B cell (primary cell): ENCODE measurements at regions of chr14 and their contacts with region 1.

Region 1: DNA sequence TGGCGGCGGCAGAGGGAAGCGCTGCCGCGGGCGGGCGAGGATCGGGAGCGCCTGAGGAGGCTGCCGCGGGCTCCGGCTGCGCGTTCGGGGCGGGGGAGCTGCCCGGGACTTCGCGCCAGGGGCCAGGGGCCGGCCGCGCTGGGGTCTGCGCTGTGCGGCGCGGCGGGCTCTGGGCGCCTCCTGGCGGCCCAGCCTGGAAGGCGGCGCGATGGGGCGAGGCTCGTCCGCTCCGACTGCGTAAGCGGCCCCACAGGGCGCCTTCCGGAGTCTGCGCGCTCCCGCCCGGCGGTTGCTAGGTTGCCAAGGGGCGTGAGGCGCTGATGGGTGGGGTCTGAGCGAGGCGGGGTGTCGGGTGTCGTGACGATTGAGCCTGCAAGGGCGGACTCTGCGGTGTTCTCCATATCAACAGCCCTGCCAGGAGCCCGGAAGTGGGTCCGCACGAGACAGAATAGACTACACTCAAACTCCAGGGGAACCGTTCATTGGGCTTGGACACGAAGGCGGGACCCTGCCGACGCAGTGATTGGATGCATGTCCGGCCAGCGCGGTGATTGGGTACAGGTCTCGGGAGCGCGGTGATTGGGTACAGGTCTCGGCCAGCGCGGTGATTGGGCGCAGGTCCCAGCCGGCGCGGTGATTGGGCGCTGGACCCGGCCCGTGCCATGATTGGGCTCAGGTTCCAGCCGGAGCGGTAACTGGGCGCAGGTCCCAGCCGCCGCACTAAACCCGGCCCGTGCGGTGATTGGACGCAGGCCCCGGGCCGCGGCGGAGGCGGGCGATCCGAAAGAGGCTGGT is at the start of gene TEDC1:
- DNase-seq: peak; percentile 100
- ATAC-seq: peak; percentile 69
- H3K4me3 ChIP-seq: peak within 1 kb of the TSS in 4 of 5 experiments; percentile 65 to 89 (median 79)
- H3K4me3 Mint-ChIP-seq: peak within 1 kb of the TSS; percentile 90
- H3K27ac ChIP-seq: peak within 1 kb of the TSS; percentile 95 to 96
- H3K27ac Mint-ChIP-seq: peak within 1 kb of the TSS; percentile 97
- H3K4me1 ChIP-seq: peaks cover 33 to 49% of the 10 kb centered on the region in 2 donors
- H3K4me1 Mint-ChIP-seq: peaks cover 35% of the 10 kb centered on the region
- H3K27me3 ChIP-seq: no peaks in the 10 kb centered on the region
- H3K27me3 Mint-ChIP-seq: no peaks in the 10 kb centered on the region
- CTCF ChIP-seq: peak; percentile 82
- total RNA-seq, gene TEDC1: 22.2 and 25.9 TPM in 2 replicates

Region 2: GRCh38 chr14:105203057-105203531 is 287.7 kb before region 1 on chr14:
- CTCF ChIA-PET with region 1: no interaction called
- POLR2A ChIA-PET with region 1: interaction called, 3 read pairs
- intact Hi-C with region 1: loop called (anchors 5 kb)
- DNase-seq: peak; percentile 77
- ATAC-seq: peak; percentile 45
- H3K4me3 ChIP-seq: no peak overlapping the region
- H3K4me3 Mint-ChIP-seq: no peak overlapping the region
- H3K27ac ChIP-seq: no peak overlapping the region
- H3K27ac Mint-ChIP-seq: no peak overlapping the region
- H3K4me1 ChIP-seq: peaks cover 18 to 29% of the 10 kb centered on the region in 2 donors
- H3K4me1 Mint-ChIP-seq: peaks cover 17% of the 10 kb centered on the region
- H3K27me3 ChIP-seq: peaks cover 0 to 53% (median 14%) of the 10 kb centered on the region in 4 experiments
- H3K27me3 Mint-ChIP-seq: peaks cover 18% of the 10 kb centered on the region
- CTCF ChIP-seq: peak; percentile 95

Region 3: GRCh38 chr14:105314287-105315200 is 176.2 kb before region 1 on chr14 and contains the start of gene PACS2:
- CTCF ChIA-PET with region 1: interaction called, 5 read pairs
- POLR2A ChIA-PET with region 1: no interaction called
- intact Hi-C with region 1: loop called (anchors 1 kb)
- DNase-seq: peak; percentile 92
- ATAC-seq: peak; percentile 80
- H3K4me3 ChIP-seq: peak within 1 kb of the TSS; percentile 5 to 67 (median 59)
- H3K4me3 Mint-ChIP-seq: peak within 1 kb of the TSS; percentile 93
- H3K27ac ChIP-seq: peak within 1 kb of the TSS in 1 of 2 donors; percentile 64
- H3K27ac Mint-ChIP-seq: peak within 1 kb of the TSS; percentile 94
- H3K4me1 ChIP-seq: peaks cover 13 to 22% of the 10 kb centered on the region in 2 donors
- H3K4me1 Mint-ChIP-seq: peaks cover 11% of the 10 kb centered on the region
- H3K27me3 ChIP-seq: no peaks in the 10 kb centered on the region
- H3K27me3 Mint-ChIP-seq: no peaks in the 10 kb centered on the region
- CTCF ChIP-seq: no peak
- total RNA-seq, gene PACS2: 70.7 and 71.8 TPM in 2 replicates

Region 4: DNA sequence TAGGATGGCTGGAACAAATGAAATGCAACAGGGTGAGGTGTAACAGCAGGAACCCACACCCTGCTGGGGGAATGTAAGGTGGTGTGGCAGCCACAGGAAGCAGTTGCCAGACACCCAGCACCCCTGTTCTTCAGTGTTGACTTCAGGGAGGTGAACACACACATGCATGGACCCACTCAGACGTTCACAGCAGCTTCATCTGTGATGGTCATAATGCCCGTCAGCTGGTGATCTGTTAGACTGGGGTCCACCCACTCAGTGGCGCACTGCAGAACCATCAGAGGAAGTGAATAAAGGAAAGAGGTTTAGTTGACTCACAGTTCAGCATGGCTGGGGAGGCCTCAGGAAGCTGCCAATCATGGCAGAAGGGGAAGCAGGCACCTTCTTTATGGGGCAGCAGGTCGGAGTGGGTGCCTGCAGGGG is 115.1 kb before region 1 on chr14:
- CTCF ChIA-PET with region 1: interaction called, 101 read pairs
- POLR2A ChIA-PET with region 1: interaction called, 4 read pairs
- intact Hi-C with region 1: no loop called
- DNase-seq: no peak
- ATAC-seq: no peak
- H3K4me3 ChIP-seq: no peak overlapping the region
- H3K4me3 Mint-ChIP-seq: no peak overlapping the region
- H3K27ac ChIP-seq: no peak overlapping the region
- H3K27ac Mint-ChIP-seq: no peak overlapping the region
- H3K4me1 ChIP-seq: peaks cover 0 to 11% of the 10 kb centered on the region in 2 donors
- H3K4me1 Mint-ChIP-seq: peaks cover 10% of the 10 kb centered on the region
- H3K27me3 ChIP-seq: no peaks in the 10 kb centered on the region
- H3K27me3 Mint-ChIP-seq: no peaks in the 10 kb centered on the region
- CTCF ChIP-seq: no peak

Region 5: DNA sequence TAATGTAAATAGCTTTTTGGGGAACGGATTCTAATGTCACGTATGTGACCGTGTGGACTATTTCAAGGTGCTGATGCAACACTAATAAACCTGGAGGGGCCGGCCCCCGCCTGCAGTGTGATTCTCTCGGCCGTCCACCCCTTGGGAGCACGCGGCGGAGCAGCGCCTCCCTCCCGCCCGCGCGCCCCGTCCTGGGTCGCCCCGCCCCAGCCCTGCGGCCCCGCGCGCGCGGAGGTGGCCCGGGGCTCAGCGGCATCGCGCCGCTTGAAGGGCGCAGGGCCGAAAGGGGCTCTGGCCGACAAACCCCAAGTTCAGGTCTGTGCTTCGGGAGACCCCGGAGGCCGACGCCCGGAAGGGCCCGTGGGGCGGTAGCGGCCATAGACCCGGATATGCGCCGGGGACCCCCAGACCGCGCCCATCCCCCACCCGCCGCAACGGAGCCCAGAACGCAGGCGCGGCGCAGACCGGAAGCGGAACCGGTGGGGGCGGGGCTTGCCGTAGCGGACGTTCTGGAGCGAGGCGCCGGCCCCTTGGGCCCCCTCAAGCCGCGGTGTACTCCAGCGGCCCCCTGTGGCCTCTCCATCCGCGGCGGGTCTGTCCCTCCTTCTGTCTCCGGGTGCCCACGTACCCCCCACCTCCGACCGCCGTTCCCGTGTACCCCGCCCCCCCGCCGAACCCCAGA is 92.6 kb before region 1 on chr14 and contains the start of gene TEX22:
- CTCF ChIA-PET with region 1: interaction called, 8 read pairs
- POLR2A ChIA-PET with region 1: interaction called, 6 read pairs
- intact Hi-C with region 1: loop called (anchors 1 kb)
- DNase-seq: peak; percentile 93
- ATAC-seq: peak; percentile 88
- H3K4me3 ChIP-seq: peak within 1 kb of the TSS; percentile 31 to 94 (median 86)
- H3K4me3 Mint-ChIP-seq: peak within 1 kb of the TSS; percentile 90
- H3K27ac ChIP-seq: peak within 1 kb of the TSS; percentile 75 to 86
- H3K27ac Mint-ChIP-seq: peak within 1 kb of the TSS; percentile 91
- H3K4me1 ChIP-seq: peaks cover 16 to 23% of the 10 kb centered on the region in 2 donors
- H3K4me1 Mint-ChIP-seq: peaks cover 16% of the 10 kb centered on the region
- H3K27me3 ChIP-seq: no peaks in the 10 kb centered on the region
- H3K27me3 Mint-ChIP-seq: no peaks in the 10 kb centered on the region
- CTCF ChIP-seq: peak; percentile 36
- total RNA-seq, gene TEX22: 7.0 and 8.4 TPM in 2 replicates

Region 6: DNA sequence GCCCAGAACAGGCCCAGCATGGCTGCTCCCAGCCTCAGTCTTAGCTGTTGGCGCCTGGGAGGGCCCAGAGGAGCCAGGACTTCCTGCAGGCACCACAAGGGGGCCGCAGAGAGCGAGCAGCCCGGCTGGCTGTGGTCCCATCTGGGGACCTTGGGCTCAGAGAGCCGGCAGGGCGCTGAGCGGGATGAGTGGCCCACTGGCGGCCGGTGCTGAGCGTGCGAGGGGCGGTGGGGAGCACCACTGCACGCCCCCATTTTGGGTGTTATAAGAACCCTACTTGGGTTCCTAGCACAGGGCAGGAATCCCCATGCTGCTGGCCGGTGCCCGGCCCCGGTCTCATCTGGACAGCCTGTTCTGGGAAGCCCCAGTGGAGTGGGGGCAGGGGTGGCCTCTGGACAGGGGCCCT is 42.1 kb before region 1 on chr14:
- CTCF ChIA-PET with region 1: interaction called, 28 read pairs
- POLR2A ChIA-PET with region 1: no interaction called
- intact Hi-C with region 1: loop called (anchors 1 kb)
- DNase-seq: peak; percentile 77
- ATAC-seq: peak; percentile 95
- H3K4me3 ChIP-seq: no peak overlapping the region
- H3K4me3 Mint-ChIP-seq: no peak overlapping the region
- H3K27ac ChIP-seq: no peak overlapping the region
- H3K27ac Mint-ChIP-seq: no peak overlapping the region
- H3K4me1 ChIP-seq: no peaks in the 10 kb centered on the region
- H3K4me1 Mint-ChIP-seq: no peaks in the 10 kb centered on the region
- H3K27me3 ChIP-seq: no peaks in the 10 kb centered on the region
- H3K27me3 Mint-ChIP-seq: no peaks in the 10 kb centered on the region
- CTCF ChIP-seq: peak; percentile 86

Region 7: GRCh38 chr14:105517096-105517495 is 26.3 kb after region 1 on chr14:
- CTCF ChIA-PET with region 1: no interaction called
- POLR2A ChIA-PET with region 1: no interaction called
- intact Hi-C with region 1: no loop called
- DNase-seq: no peak
- ATAC-seq: no peak
- H3K4me3 ChIP-seq: no peak overlapping the region
- H3K4me3 Mint-ChIP-seq: no peak overlapping the region
- H3K27ac ChIP-seq: no peak overlapping the region
- H3K27ac Mint-ChIP-seq: no peak overlapping the region
- H3K4me1 ChIP-seq: peaks cover under 1 to 4% of the 10 kb centered on the region in 2 donors
- H3K4me1 Mint-ChIP-seq: no peaks in the 10 kb centered on the region
- H3K27me3 ChIP-seq: peaks cover 0 to 14% (median 5%) of the 10 kb centered on the region in 4 experiments
- H3K27me3 Mint-ChIP-seq: peaks cover 45% of the 10 kb centered on the region
- CTCF ChIP-seq: no peak

Region 8: GRCh38 chr14:105527661-105528581 is 37.2 kb after region 1 on chr14:
- CTCF ChIA-PET with region 1: interaction called, 26 read pairs
- POLR2A ChIA-PET with region 1: interaction called, 6 read pairs
- intact Hi-C with region 1: loop called (anchors 1 kb)
- DNase-seq: peak; percentile 89
- ATAC-seq: peak; percentile 50
- H3K4me3 ChIP-seq: peak overlapping the region in 4 of 5 experiments; percentile 37 to 66 (median 60)
- H3K4me3 Mint-ChIP-seq: peak overlapping the region; percentile 80
- H3K27ac ChIP-seq: peak overlapping the region in 1 of 2 donors; percentile 30
- H3K27ac Mint-ChIP-seq: no peak overlapping the region
- H3K4me1 ChIP-seq: peaks cover 58 to 64% of the 10 kb centered on the region in 2 donors
- H3K4me1 Mint-ChIP-seq: peaks cover 49% of the 10 kb centered on the region
- H3K27me3 ChIP-seq: peaks cover 0 to 48% (median 9%) of the 10 kb centered on the region in 4 experiments
- H3K27me3 Mint-ChIP-seq: no peaks in the 10 kb centered on the region
- CTCF ChIP-seq: peak; percentile 85